ENCODE measurements at regions of chr14 and their contacts with region 1.

Region 1: GRCh38 chr14:22221508-22221907 is 367.5 kb downstream of the DAD1 start:
- DNase-seq: peak; percentile 13
- H3K4me3 ChIP-seq: no peak overlapping the region
- H3K27ac ChIP-seq: no peak overlapping the region
- H3K4me1 ChIP-seq: peaks cover 9% of the 10 kb centered on the region
- H3K27me3 ChIP-seq: no peaks in the 10 kb centered on the region
- CTCF ChIP-seq: peak; percentile 34 to 49

Region 2: GRCh38 chr14:22084393-22085281 is 136.9 kb before region 1 on chr14:
- CTCF ChIA-PET with region 1: no interaction called
- dilution Hi-C with region 1: no loop called
- in situ Hi-C with region 1: no loop called
- intact Hi-C with region 1: no loop called
- DNase-seq: peak; percentile 39
- H3K4me3 ChIP-seq: no peak overlapping the region
- H3K27ac ChIP-seq: no peak overlapping the region
- H3K4me1 ChIP-seq: no peaks in the 10 kb centered on the region
- H3K27me3 ChIP-seq: no peaks in the 10 kb centered on the region
- CTCF ChIP-seq: peak; percentile 65 to 76

Region 3: DNA sequence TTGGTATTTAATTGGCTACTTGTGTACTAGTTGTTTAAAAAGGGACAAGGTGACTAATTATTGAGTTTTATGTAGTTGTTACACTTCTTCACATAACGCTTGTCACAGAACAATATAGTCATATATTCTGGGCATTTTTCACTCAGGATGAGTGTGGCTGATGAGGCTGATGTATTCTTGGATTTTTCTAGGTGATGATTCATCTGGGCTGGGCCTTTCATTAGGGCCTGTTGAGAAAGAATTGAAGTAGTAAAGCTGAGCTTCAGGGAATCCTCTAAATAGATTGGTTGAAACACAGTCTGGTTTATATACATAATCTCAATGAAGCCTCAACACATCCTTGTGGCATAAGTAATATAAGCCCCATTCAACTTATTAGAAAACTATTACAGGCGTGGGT is 78.1 kb before region 1 on chr14:
- CTCF ChIA-PET with region 1: no interaction called
- dilution Hi-C with region 1: no loop called
- in situ Hi-C with region 1: no loop called
- intact Hi-C with region 1: no loop called
- DNase-seq: peak; percentile 80
- H3K4me3 ChIP-seq: no peak overlapping the region
- H3K27ac ChIP-seq: no peak overlapping the region
- H3K4me1 ChIP-seq: peaks cover 8% of the 10 kb centered on the region
- H3K27me3 ChIP-seq: no peaks in the 10 kb centered on the region
- CTCF ChIP-seq: no peak

Region 4: DNA sequence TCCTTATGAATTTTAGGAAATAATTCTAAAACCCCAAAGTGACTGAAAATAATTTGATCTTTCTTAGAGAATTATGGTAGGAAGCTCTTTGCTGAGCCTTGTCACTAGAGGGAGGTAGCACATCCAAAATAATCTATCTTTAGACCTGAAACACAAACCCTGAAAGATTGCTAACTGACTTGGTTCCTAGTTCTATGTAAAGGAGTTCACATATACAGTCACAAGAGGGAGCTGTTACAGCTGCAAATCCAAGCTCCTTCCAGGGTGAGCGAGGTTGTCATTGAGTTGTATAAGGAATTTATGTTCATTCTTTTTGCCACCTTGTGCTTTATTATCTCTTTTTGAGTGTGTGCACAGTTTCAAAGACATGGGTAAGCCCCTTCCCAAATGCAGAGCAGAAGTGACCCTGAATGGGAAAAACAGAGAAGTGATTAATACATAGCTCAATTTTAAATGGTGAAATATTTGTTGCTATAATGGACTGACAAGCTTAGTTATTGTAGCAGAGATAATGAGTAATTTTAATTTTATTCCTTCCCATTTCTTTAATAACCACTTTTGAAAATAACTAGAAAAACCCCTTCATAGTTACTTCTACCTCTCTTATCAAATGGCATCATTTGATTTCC is 20.4 kb before region 1 on chr14:
- CTCF ChIA-PET with region 1: interaction called, 14 read pairs
- dilution Hi-C with region 1: no loop called
- in situ Hi-C with region 1: no loop called
- intact Hi-C with region 1: no loop called
- DNase-seq: peak; percentile 62
- H3K4me3 ChIP-seq: no peak overlapping the region
- H3K27ac ChIP-seq: no peak overlapping the region
- H3K4me1 ChIP-seq: no peaks in the 10 kb centered on the region
- H3K27me3 ChIP-seq: no peaks in the 10 kb centered on the region
- CTCF ChIP-seq: peak; percentile 79 to 81

Region 5: DNA sequence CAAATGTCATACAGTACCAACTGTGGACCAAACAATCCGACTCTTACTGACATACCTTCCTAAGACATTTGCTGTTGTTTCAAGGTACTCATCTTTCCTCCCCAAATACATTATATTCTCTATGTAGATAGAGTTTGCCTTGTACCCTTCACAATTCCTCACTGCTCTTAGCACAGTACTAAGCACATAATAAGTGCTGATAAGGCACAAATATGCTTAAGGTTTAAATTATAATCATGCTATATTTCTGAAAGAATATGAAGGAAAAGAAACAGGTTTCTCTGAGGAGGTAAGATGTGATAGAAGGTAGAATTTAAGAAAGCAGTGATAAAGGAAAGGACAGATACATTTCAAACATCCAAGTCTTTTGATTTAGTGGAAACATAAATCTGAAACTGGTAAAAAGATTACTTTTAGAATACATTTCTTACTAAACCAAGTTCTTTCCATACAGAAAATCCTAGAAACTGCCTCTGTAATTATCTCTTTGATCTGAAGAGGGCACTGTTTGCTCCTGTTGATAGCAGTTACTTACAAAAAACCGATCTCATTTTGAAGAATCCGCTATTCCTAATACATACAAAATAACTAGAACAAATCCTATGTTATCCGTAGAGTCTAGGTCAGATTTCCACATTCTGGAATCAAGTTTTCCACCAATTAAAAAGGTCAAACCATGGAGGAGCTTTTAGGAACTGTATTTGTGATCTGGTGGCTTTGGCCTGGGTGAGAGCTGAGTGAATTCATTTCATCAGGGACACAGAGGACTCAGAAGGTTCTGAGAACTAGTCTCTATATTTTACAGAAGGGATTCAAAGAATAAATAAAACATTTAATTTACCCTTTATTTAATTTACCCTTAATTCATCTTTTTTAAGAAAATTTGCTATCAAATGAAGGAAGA is 55.7 kb after region 1 on chr14:
- CTCF ChIA-PET with region 1: interaction called, 25 read pairs
- dilution Hi-C with region 1: no loop called
- in situ Hi-C with region 1: no loop called
- intact Hi-C with region 1: loop called (anchors 2 kb)
- DNase-seq: no peak
- H3K4me3 ChIP-seq: no peak overlapping the region
- H3K27ac ChIP-seq: no peak overlapping the region
- H3K4me1 ChIP-seq: no peaks in the 10 kb centered on the region
- H3K27me3 ChIP-seq: no peaks in the 10 kb centered on the region
- CTCF ChIP-seq: peak; percentile 63 to 78

Region 6: GRCh38 chr14:22472935-22473854 is 251.7 kb after region 1 on chr14:
- CTCF ChIA-PET with region 1: no interaction called
- dilution Hi-C with region 1: no loop called
- in situ Hi-C with region 1: no loop called
- intact Hi-C with region 1: loop called (anchors 5 kb)
- DNase-seq: peak; percentile 39
- H3K4me3 ChIP-seq: no peak overlapping the region
- H3K27ac ChIP-seq: no peak overlapping the region
- H3K4me1 ChIP-seq: no peaks in the 10 kb centered on the region
- H3K27me3 ChIP-seq: peaks cover 5% of the 10 kb centered on the region
- CTCF ChIP-seq: peak; percentile 52 to 65

Region 7: DNA sequence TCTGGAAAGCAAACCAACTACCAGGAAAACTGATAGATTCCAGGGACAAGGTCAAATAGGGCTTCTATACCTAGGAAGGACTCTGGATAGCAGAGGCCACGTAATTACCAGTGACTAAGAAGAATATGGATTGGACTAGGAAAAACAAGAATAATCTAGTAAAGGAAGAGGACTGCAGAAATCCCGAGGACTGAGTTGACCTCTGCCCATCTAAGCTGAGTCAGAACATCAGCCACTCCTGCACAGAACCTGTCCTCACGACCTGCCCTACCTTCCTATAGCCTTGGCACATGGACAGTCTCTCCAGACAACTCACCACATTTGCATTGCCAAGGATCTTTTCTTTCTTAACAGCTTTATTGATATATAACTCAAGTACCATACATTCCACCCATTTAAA is 420.3 kb after region 1 on chr14:
- CTCF ChIA-PET with region 1: no interaction called
- dilution Hi-C with region 1: no loop called
- in situ Hi-C with region 1: no loop called
- intact Hi-C with region 1: no loop called
- DNase-seq: peak; percentile 32
- H3K4me3 ChIP-seq: no peak overlapping the region
- H3K27ac ChIP-seq: no peak overlapping the region
- H3K4me1 ChIP-seq: peaks cover 10% of the 10 kb centered on the region
- H3K27me3 ChIP-seq: no peaks in the 10 kb centered on the region
- CTCF ChIP-seq: no peak